HepG2 (cell line): ENCODE measurements at regions of chrX and their contacts with region 1.

Region 1: DNA sequence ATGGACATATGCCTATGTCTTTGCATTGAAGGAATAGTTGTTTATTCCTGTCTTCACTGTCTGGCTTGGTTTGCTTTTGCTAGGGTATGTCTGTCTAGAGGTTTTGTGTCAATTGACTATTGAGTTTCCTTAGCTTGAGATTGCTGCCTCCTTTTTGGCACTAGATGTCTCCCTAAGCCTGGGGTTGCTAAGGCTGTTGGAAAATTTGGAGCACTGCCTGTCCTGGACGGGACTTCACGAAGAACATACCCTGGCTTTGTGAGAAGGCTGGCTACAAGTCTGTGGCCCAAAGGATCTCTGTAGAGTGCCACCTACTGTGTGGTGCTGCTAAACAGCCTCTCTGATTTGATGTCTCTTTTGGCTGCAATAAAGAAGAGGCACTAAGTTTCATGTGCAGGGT is 183.8 kb upstream of the NUDT10 start:
- DNase-seq: no peak
- ATAC-seq: no peak
- H3K4me3 ChIP-seq: no peak overlapping the region
- H3K27ac ChIP-seq: no peak overlapping the region
- H3K4me1 ChIP-seq: no peaks in the 10 kb centered on the region
- H3K27me3 ChIP-seq: no peaks in the 10 kb centered on the region
- CTCF ChIP-seq: peak; percentile 20; the same call in 1 of the 2 replicates
- EP300 ChIP-seq: no peak
- POLR2A ChIP-seq: no peak
- RAD21 ChIP-seq: no peak

Region 2: GRCh38 chrX:50671661-50672060 is 477.2 kb before region 1 on chrX:
- CTCF ChIA-PET with region 1: no interaction called
- POLR2A ChIA-PET with region 1: no interaction called
- in situ Hi-C with region 1: no loop called
- intact Hi-C with region 1: no loop called
- DNase-seq: no peak
- ATAC-seq: no peak
- H3K4me3 ChIP-seq: no peak overlapping the region
- H3K27ac ChIP-seq: no peak overlapping the region
- H3K4me1 ChIP-seq: no peaks in the 10 kb centered on the region
- H3K27me3 ChIP-seq: no peaks in the 10 kb centered on the region
- CTCF ChIP-seq: no peak
- EP300 ChIP-seq: no peak
- POLR2A ChIP-seq: no peak
- RAD21 ChIP-seq: no peak

Region 3: DNA sequence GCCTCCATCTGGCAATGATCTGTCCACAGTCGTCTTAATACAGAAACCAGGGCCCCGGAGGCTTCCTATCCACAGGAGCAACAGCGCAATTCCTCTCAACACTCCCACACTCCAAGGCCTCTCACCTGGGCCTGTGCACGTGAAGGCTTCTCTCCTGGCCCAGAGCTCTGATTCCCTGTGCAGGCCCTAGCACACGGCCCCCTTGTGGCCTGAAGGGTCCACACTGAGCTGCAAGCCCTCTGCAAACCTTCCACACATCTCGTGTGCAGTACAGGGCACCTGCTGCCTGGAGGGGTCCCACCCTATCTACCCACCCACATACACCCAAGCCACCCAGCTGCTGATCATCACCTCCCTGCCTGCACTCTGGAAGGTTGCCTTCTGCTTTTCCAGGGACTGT is 33.7 kb after region 1 on chrX:
- CTCF ChIA-PET with region 1: no interaction called
- POLR2A ChIA-PET with region 1: no interaction called
- in situ Hi-C with region 1: no loop called
- intact Hi-C with region 1: loop called (anchors 1 kb)
- DNase-seq: no peak
- ATAC-seq: peak; percentile 87
- H3K4me3 ChIP-seq: no peak overlapping the region
- H3K27ac ChIP-seq: no peak overlapping the region
- H3K4me1 ChIP-seq: no peaks in the 10 kb centered on the region
- H3K27me3 ChIP-seq: no peaks in the 10 kb centered on the region; a peak in 1 of 5 replicates
- CTCF ChIP-seq: peak; percentile 45
- EP300 ChIP-seq: no peak
- POLR2A ChIP-seq: no peak
- RAD21 ChIP-seq: no peak